Right ventricle myocardium superior (tissue), 1 donor: ENCODE measurements at regions of chr2 and their contacts with region 1.

Region 1: GRCh38 chr2:128321784-128322714 is 3.4 kb upstream of the HS6ST1 start:
- DNase-seq: peak; percentile 92
- ATAC-seq: peak; percentile 70

Region 2: DNA sequence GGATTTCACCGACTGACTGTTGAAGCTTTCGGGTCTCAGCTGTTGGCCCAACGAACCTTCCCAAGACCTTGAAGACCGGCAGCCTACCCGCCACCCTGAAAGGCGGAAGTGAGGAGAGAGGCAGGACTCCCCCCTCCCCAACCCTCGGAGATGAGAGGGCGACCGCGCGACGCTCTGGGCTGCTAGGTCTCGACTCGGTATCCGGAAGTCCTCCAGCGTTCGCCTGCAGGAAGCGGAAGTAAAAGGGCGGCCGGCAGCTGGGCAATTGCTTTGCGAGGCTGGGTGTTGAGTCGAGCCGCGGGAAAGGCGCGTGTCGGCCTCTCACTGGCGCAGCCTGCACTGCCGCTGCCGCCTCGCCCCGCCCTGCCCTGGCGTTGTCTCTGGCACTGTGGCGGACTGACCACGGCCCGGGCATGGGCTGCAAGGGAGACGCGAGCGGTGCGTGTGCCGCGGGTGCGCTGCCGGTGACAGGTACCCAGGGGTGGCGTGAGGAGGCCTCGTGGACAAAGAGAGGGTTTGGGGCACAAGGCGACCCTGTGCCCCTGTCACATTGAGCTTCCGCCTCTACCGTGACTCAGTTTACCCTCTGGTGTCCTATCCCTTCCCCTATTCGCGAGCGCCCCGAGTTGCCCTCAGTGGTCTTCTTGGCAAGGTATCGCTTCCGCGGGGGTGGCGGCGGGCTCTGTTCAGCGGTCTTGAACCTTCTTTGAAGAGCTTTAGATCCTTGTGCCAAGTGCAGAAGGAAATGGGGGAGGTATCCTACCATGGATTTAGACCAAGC is 230.9 kb before region 1 on chr2 and contains the start of gene UGGT1:
- intact Hi-C with region 1: no loop called
- DNase-seq: peak; percentile 96
- ATAC-seq: peak; percentile 99
- total RNA-seq, gene UGGT1: 21.8 TPM

Region 3: DNA sequence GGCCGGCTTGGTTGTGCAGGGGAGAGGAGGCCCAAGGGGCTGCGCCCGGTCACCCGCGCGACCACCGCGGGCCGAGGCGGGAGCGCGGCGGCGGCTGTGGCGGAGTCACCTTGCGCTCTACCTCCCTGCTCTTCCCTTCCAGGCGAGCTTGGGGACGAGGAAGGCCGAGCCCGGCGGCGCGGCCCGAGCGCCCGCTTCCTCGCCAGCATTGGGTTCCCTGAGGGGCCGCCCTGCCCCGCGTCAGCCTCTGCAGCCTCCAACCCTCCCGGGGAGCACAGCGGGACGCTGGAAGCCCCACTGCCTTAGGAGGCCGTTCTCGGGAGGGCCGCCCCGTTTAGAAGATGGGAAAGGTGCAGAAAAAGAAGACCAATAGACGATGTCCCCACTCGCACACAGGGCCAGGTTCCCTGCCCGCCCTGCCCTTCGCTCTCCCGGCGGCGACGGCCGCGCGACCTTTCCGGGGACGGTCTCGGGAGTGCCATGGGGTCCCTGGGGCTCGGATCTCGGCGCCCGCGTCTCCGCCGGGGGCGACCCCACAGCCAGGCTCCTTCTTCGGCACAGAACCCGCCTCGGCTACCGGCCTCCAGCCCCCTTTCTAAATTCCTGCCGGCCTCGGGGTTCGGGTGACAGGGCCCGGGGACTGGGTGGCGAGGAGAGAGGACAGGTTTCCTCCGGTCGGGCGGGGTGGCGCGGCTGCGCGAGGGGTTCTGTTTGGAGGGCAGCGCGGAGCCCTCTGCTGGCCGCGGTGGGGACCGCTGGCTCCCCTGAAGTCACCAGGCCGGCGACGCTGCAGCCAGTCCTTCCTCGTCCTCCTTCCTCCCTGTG is 88.9 kb before region 1 on chr2:
- intact Hi-C with region 1: loop called (anchors 10 kb)
- DNase-seq: peak; percentile 95
- ATAC-seq: peak; percentile 99

Region 4: DNA sequence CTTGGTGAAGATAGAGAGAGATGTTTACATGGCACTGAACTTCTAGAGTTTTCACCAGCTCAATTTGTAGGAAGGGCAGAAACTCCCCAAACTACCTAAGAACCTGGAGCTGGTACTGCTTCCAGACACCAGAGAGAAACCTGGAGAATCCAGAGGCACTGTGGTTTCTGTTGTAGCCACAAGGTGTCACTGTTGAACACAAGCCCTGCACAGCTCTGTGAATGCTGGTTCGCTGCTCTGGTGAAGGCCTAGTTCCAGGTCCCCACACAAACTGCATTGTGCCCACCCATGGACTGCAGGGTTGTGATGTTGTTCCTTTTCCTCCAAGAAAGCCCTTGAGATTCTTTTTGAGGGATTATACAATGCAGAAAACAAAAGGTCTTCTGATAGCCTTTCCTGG is 147.2 kb after region 1 on chr2:
- intact Hi-C with region 1: loop called (anchors 10 kb)
- DNase-seq: no peak
- ATAC-seq: no peak

Region 5: GRCh38 chr2:128531856-128532255 is 209.8 kb after region 1 on chr2:
- intact Hi-C with region 1: loop called (anchors 5 kb)
- DNase-seq: no peak
- ATAC-seq: no peak